HCT116 (cell line): ENCODE measurements at regions of chrX and their contacts with region 1.

Region 1: GRCh38 chrX:140733769-140734342 is 24.3 kb downstream of the LINC00632 start:
- DNase-seq: no peak
- ATAC-seq: peak; percentile 67
- H3K4me3 ChIP-seq: no peak overlapping the region
- H3K27ac ChIP-seq: no peak overlapping the region
- H3K4me1 ChIP-seq: no peaks in the 10 kb centered on the region
- H3K27me3 ChIP-seq: no peaks in the 10 kb centered on the region
- CTCF ChIP-seq: peak in 2 of 3 experiments; percentile 53 to 55; a peak in 4 of 6 replicates
- POLR2A ChIP-seq: no peak
- RAD21 ChIP-seq: peak; percentile 52

Region 2: DNA sequence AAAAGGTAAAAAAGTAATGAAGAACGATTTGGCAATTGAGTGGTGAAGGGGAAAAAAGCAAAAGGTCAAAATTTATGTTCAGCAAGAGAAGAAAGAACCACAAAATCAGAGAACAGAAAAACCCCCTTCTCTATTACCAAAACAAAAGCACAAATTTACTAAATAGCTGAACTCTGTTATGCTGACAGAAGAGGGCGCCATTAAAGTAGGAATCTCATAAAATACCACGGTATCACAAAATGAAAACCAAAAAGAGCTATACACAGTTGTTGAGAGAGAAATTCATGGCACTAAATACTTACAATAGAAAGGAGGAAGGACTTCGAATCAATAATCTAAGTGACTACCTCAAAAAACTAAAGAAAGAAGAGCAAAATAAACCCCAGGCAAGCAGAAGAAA is 698.9 kb before region 1 on chrX:
- CTCF ChIA-PET with region 1: no interaction called
- POLR2A ChIA-PET with region 1: no interaction called
- RAD21 ChIA-PET with region 1: no interaction called
- intact Hi-C with region 1: loop called (anchors 1 kb)
- DNase-seq: no peak
- ATAC-seq: no peak
- H3K4me3 ChIP-seq: no peak overlapping the region
- H3K27ac ChIP-seq: no peak overlapping the region
- H3K4me1 ChIP-seq: no peaks in the 10 kb centered on the region
- H3K27me3 ChIP-seq: no peaks in the 10 kb centered on the region
- CTCF ChIP-seq: peak; percentile 11 to 53 (median 24); a peak in 3 of 6 replicates
- POLR2A ChIP-seq: no peak
- RAD21 ChIP-seq: peak; percentile 9; the same call in 1 of the 2 replicates

Region 3: DNA sequence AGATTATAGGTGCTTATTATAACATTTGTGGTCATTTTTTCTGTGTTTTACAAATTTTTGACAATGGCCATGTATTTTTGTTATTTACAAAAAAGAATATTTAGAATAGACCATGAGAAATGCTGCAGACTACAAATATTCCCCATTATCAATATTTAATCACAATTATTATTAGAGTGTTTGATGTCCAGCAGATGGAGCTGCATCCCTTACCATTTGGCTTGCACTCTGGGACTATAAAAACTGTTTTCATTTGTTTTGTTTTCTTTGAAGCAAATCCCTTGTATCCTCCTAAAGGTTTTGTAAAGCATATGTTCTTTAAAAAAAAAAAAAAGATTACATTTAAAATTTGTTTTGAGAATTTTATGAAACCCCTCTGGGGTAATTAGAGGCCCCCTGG is 683.0 kb before region 1 on chrX:
- CTCF ChIA-PET with region 1: no interaction called
- POLR2A ChIA-PET with region 1: no interaction called
- RAD21 ChIA-PET with region 1: no interaction called
- intact Hi-C with region 1: loop called (anchors 2 kb)
- DNase-seq: no peak
- ATAC-seq: no peak
- H3K4me3 ChIP-seq: no peak overlapping the region
- H3K27ac ChIP-seq: no peak overlapping the region
- H3K4me1 ChIP-seq: no peaks in the 10 kb centered on the region
- H3K27me3 ChIP-seq: no peaks in the 10 kb centered on the region
- CTCF ChIP-seq: peak in 1 of 3 experiments; percentile 9; a peak in 1 of 6 replicates
- POLR2A ChIP-seq: no peak
- RAD21 ChIP-seq: peak; percentile 16; the same call in 1 of the 2 replicates